Activated CD4-positive, alpha-beta memory T cell treated with anti-CD3 and anti-CD28 coated beads for 36 hours (primary cell): ENCODE measurements at regions of chr1 and their contacts with region 1.

Region 1: GRCh38 chr1:171515299-171515698 is 30.0 kb downstream of the PRRC2C start:
- DNase-seq: no peak
- H3K4me3 Mint-ChIP-seq: no peak overlapping the region
- H3K27ac Mint-ChIP-seq: peak overlapping the region; percentile 8
- H3K4me1 Mint-ChIP-seq: peaks cover 55% of the 10 kb centered on the region
- H3K27me3 Mint-ChIP-seq: no peaks in the 10 kb centered on the region

Region 2: GRCh38 chr1:171501305-171502024 is 13.8 kb before region 1 on chr1:
- CTCF ChIA-PET with region 1: interaction called, 3 read pairs
- POLR2A ChIA-PET with region 1: interaction called, 3 read pairs
- intact Hi-C with region 1: loop called (anchors 2 kb)
- DNase-seq: peak; percentile 25
- H3K4me3 Mint-ChIP-seq: no peak overlapping the region
- H3K27ac Mint-ChIP-seq: peak overlapping the region; percentile 85
- H3K4me1 Mint-ChIP-seq: peaks cover 89% of the 10 kb centered on the region
- H3K27me3 Mint-ChIP-seq: no peaks in the 10 kb centered on the region

Region 3: GRCh38 chr1:171576144-171576543 is 60.8 kb after region 1 on chr1:
- CTCF ChIA-PET with region 1: no interaction called
- POLR2A ChIA-PET with region 1: no interaction called
- intact Hi-C with region 1: no loop called
- DNase-seq: no peak
- H3K4me3 Mint-ChIP-seq: no peak overlapping the region
- H3K27ac Mint-ChIP-seq: no peak overlapping the region
- H3K4me1 Mint-ChIP-seq: peaks cover 13% of the 10 kb centered on the region
- H3K27me3 Mint-ChIP-seq: no peaks in the 10 kb centered on the region